ENCODE measurements at regions of chr12 and their contacts with region 1.

Region 1: DNA sequence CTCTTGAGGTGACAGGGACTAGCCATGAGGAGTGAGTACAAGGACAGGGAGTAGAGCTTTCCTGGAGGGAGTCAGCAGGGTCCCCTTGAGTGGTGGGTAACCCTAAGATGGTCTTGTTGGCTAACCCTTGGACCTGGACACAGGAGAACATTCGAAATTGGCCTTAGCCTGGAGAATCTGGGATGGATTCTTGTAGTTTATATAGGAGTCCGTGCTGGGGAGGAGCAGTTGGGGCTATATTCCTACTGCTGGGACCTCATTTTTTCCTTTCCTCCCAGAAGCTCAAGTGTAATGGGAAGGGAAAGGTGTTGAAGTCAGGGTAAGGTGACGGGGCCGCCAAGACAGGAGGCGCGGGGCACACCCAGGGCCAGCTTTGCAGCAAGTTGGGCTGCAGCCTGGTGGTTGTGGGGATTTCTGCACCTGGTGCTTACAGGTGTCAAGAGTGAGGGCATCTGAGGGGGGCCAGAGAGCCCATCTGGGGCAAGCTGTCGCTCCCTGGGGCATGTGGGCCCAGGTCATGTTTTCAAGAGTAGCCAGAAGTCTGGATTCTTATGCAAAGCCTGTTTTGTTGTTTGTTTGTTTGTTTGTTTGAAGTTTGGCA is 5.1 kb downstream of the BCL7A start:
- DNase-seq: no peak
- ATAC-seq: no peak
- H3K4me3 ChIP-seq: no peak overlapping the region
- H3K27ac ChIP-seq: peak overlapping the region; percentile 41; the same call in 1 of the 2 replicates
- H3K4me1 ChIP-seq: peaks cover 31% of the 10 kb centered on the region
- H3K27me3 ChIP-seq: no peaks in the 10 kb centered on the region
- CTCF ChIP-seq: no peak

Region 2: DNA sequence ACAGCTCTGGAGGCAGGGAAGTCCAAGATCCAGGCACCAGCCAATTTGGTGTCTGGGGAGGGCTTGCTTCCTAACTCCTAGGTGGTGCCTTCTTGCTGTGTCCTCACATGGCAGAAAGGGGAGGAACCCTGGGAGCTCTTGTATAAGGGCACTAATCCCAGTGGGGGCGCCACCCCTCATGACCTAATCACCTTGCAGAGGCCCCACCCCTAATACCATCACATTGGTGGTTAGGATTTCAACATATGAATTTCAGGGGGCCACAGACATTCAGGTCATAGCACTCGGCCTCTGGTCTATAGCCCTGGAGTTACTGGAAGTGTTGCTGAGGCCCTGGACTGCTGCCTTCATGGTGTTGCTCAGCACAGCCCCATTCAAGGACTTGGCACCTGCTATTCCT is 123.6 kb before region 1 on chr12:
- CTCF ChIA-PET with region 1: no interaction called
- POLR2A ChIA-PET with region 1: interaction called, 13 read pairs
- in situ Hi-C with region 1: no loop called
- intact Hi-C with region 1: no loop called
- DNase-seq: no peak
- ATAC-seq: peak; percentile 69; the same call in 1 of the 2 replicates
- H3K4me3 ChIP-seq: no peak overlapping the region
- H3K27ac ChIP-seq: no peak overlapping the region
- H3K4me1 ChIP-seq: no peaks in the 10 kb centered on the region
- H3K27me3 ChIP-seq: no peaks in the 10 kb centered on the region
- CTCF ChIP-seq: no peak